K562 (cell line): ENCODE measurements at regions of chr17 and their contacts with region 1.

Region 1: GRCh38 chr17:27563532-27563931 is 67.5 kb upstream of the LGALS9 start:
- DNase-seq: no peak
- ATAC-seq: no peak
- H3K4me3 ChIP-seq: no peak overlapping the region
- H3K27ac ChIP-seq: no peak overlapping the region
- H3K4me1 ChIP-seq: peaks cover 28 to 34% of the 10 kb centered on the region in 2 experiments
- H3K27me3 ChIP-seq: no peaks in the 10 kb centered on the region
- CTCF ChIP-seq: no peak
- EP300 ChIP-seq: no peak
- POLR2A ChIP-seq: no peak
- RAD21 ChIP-seq: no peak

Region 2: DNA sequence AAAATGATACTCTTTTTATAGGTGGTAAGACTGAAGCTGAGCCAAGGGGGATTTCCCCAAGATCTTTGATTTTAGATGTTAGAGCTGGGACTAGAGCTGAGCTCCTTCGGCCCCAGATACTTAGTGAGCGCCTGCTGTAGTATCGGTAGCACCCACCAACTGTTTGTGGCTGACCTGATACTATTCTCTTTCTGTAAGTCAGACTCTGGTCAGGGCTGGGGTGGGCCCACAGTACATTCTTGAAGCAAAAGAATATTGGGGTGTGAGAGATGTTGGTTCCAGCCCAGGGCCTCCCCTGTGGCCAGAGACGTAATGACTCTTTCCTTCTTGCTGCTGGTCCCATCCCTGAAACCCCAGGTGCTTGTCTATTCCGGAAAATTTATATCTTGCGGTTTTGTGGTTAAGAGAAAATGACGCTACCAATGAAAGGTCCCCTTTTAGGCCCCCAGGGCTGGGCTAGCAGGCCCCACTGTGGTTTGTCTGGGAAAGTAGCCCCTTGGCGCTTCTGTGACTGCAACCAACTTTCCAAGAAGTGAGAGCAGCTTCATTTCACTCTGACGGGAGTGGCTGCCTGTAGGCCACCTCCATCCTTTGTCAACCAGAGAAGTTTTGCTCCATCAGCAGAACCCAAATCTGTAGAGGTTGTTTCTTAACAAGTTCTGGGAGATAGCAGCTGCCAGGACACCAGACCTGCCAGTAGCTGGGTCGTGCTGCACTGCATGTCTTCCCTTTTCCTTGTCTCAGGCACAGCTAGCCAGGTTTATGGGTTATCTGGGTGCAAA is 19.0 kb before region 1 on chr17:
- CTCF ChIA-PET with region 1: no interaction called
- POLR2A ChIA-PET with region 1: interaction called, 12 read pairs
- in situ Hi-C with region 1: no loop called
- intact Hi-C with region 1: no loop called
- DNase-seq: peak; percentile 59 to 87 (median 74)
- ATAC-seq: peak; percentile 75
- H3K4me3 ChIP-seq: no peak overlapping the region
- H3K27ac ChIP-seq: peak overlapping the region; percentile 49; the same call in 1 of the 3 replicates
- H3K4me1 ChIP-seq: peaks cover 55 to 63% of the 10 kb centered on the region in 2 experiments
- H3K27me3 ChIP-seq: no peaks in the 10 kb centered on the region
- CTCF ChIP-seq: peak; percentile 20 to 23 (median 21); a peak in 2 of 6 replicates
- EP300 ChIP-seq: peak; percentile 80
- POLR2A ChIP-seq: no peak
- RAD21 ChIP-seq: peak; percentile 25 to 43